ENCODE measurements at regions of chr14 and their contacts with region 1.

Region 1: GRCh38 chr14:88189417-88190191 is 133.5 kb downstream of the KCNK10 start:
- DNase-seq: peak; percentile 81
- ATAC-seq: peak; percentile 97
- H3K4me3 ChIP-seq: peak overlapping the region in 2 of 3 experiments; percentile 30 to 61; a peak in 4 of 6 replicates
- H3K27ac ChIP-seq: no peak overlapping the region
- H3K4me1 ChIP-seq: peaks cover 13% of the 10 kb centered on the region
- H3K27me3 ChIP-seq: peaks cover 1 to 15% of the 10 kb centered on the region in 2 experiments; a peak in 2 of 5 replicates
- CTCF ChIP-seq: peak; percentile 84
- EP300 ChIP-seq: no peak
- POLR2A ChIP-seq: no peak
- RAD21 ChIP-seq: peak; percentile 57; the same call in 1 of the 2 replicates

Region 2: DNA sequence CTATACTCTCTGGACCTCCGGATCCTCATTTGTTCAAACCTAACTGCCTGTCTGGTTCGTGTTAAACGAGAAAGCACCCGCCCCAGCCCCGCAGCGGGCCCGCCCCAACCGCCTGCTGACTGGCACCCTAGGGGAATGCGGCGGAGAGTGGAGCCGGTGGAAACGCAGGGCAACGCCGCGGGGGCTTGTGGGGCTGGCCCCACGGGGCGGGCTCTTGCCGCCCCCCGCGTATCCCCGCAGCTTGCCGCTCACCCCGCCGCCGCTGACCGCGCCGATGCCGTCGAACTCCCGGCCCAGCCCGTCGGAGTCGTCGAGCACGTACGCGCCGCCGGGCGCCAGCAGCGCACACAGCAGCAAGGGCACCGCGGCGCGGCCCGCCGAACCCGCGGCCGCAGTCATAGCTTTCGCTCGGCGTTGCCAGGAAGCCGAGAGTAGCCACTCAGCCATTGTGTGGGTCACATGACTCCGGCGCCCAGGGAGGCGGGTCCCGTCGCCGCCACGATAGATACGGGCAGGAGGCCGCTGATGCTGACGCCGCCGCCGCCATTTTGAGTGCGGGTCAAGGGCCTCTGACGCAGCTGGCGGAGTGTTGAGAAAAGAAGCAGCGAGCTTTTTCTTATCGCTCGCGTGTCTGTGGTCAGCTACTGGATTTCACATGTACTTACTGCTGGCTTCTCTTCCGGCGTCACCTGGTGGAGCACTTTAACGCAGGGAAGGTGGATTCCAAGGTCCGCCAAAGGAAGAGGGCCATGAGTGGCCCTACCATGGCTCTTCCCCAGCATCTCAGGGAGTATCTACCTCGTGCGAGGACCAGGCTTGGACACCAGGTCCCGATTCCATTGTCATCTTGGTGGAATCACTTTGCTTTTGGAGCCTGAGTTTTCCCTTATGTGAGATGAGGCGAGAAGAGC is 196.6 kb before region 1 on chr14 and contains the start of gene GALC:
- CTCF ChIA-PET with region 1: no interaction called
- POLR2A ChIA-PET with region 1: no interaction called
- in situ Hi-C with region 1: no loop called
- intact Hi-C with region 1: no loop called
- DNase-seq: no peak
- ATAC-seq: no peak
- H3K4me3 ChIP-seq: no peak within 1 kb of the TSS
- H3K27ac ChIP-seq: no peak within 1 kb of the TSS
- H3K4me1 ChIP-seq: peaks cover 35% of the 10 kb centered on the region
- H3K27me3 ChIP-seq: no peaks in the 10 kb centered on the region
- CTCF ChIP-seq: no peak
- EP300 ChIP-seq: no peak
- POLR2A ChIP-seq: no peak
- RAD21 ChIP-seq: no peak
- total RNA-seq, gene GALC: not detected in 2 replicates

Region 3: GRCh38 chr14:88106377-88106776 is 83.2 kb before region 1 on chr14:
- CTCF ChIA-PET with region 1: no interaction called
- POLR2A ChIA-PET with region 1: no interaction called
- in situ Hi-C with region 1: no loop called
- intact Hi-C with region 1: no loop called
- DNase-seq: no peak
- ATAC-seq: peak; percentile 52
- H3K4me3 ChIP-seq: no peak overlapping the region
- H3K27ac ChIP-seq: no peak overlapping the region
- H3K4me1 ChIP-seq: no peaks in the 10 kb centered on the region
- H3K27me3 ChIP-seq: no peaks in the 10 kb centered on the region
- CTCF ChIP-seq: no peak
- EP300 ChIP-seq: no peak
- POLR2A ChIP-seq: no peak
- RAD21 ChIP-seq: no peak

Region 4: GRCh38 chr14:88154321-88154720 is 35.3 kb before region 1 on chr14:
- CTCF ChIA-PET with region 1: no interaction called
- POLR2A ChIA-PET with region 1: no interaction called
- in situ Hi-C with region 1: no loop called
- intact Hi-C with region 1: no loop called
- DNase-seq: no peak
- ATAC-seq: no peak
- H3K4me3 ChIP-seq: no peak overlapping the region
- H3K27ac ChIP-seq: no peak overlapping the region
- H3K4me1 ChIP-seq: no peaks in the 10 kb centered on the region
- H3K27me3 ChIP-seq: peaks cover 0 to 4% of the 10 kb centered on the region in 2 experiments; a peak in 2 of 5 replicates
- CTCF ChIP-seq: no peak
- EP300 ChIP-seq: no peak
- POLR2A ChIP-seq: no peak
- RAD21 ChIP-seq: no peak

Region 5: GRCh38 chr14:88168498-88169165 is 21.0 kb before region 1 on chr14:
- CTCF ChIA-PET with region 1: no interaction called
- POLR2A ChIA-PET with region 1: no interaction called
- in situ Hi-C with region 1: no loop called
- intact Hi-C with region 1: no loop called
- DNase-seq: peak; percentile 50
- ATAC-seq: peak; percentile 95
- H3K4me3 ChIP-seq: no peak overlapping the region
- H3K27ac ChIP-seq: no peak overlapping the region
- H3K4me1 ChIP-seq: peaks cover 19% of the 10 kb centered on the region
- H3K27me3 ChIP-seq: no peaks in the 10 kb centered on the region
- CTCF ChIP-seq: peak; percentile 89
- EP300 ChIP-seq: no peak
- POLR2A ChIP-seq: no peak
- RAD21 ChIP-seq: peak; percentile 40; the same call in 1 of the 2 replicates

Region 6: DNA sequence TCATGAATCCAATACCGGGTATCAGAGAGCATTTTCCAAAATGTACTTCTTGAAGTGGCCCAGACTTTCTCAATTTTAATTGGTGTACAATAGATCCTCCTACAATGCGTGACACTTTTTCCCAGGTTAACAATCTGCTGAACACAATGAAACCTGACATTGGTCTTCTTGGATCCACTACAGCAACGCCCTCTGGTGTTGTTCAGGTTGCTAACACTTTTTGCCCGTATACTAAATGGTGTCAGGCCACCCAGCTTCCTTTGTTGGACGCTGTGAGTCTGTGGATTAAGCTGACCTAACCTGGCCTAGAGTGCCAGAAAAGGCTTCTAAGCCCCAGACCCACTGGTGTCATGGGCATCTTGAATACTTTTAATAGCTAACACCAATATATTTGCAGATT is 44.3 kb after region 1 on chr14:
- CTCF ChIA-PET with region 1: interaction called, 7 read pairs
- POLR2A ChIA-PET with region 1: no interaction called
- in situ Hi-C with region 1: no loop called
- intact Hi-C with region 1: loop called (anchors 1 kb)
- DNase-seq: peak; percentile 40
- ATAC-seq: peak; percentile 83
- H3K4me3 ChIP-seq: no peak overlapping the region
- H3K27ac ChIP-seq: no peak overlapping the region
- H3K4me1 ChIP-seq: no peaks in the 10 kb centered on the region
- H3K27me3 ChIP-seq: no peaks in the 10 kb centered on the region; a peak in 1 of 5 replicates
- CTCF ChIP-seq: peak; percentile 70
- EP300 ChIP-seq: no peak
- POLR2A ChIP-seq: no peak
- RAD21 ChIP-seq: peak; percentile 40

Region 7: GRCh38 chr14:88380405-88380804 is 190.8 kb after region 1 on chr14:
- CTCF ChIA-PET with region 1: no interaction called
- POLR2A ChIA-PET with region 1: no interaction called
- in situ Hi-C with region 1: no loop called
- intact Hi-C with region 1: loop called (anchors 1 kb)
- DNase-seq: no peak
- ATAC-seq: 0 out of 3 replicates have a peak, but pooled peaks have one; percentile 19
- H3K4me3 ChIP-seq: no peak overlapping the region
- H3K27ac ChIP-seq: no peak overlapping the region
- H3K4me1 ChIP-seq: peaks cover 8% of the 10 kb centered on the region
- H3K27me3 ChIP-seq: no peaks in the 10 kb centered on the region
- CTCF ChIP-seq: peak; percentile 49
- EP300 ChIP-seq: no peak
- POLR2A ChIP-seq: no peak
- RAD21 ChIP-seq: no peak

Region 8: DNA sequence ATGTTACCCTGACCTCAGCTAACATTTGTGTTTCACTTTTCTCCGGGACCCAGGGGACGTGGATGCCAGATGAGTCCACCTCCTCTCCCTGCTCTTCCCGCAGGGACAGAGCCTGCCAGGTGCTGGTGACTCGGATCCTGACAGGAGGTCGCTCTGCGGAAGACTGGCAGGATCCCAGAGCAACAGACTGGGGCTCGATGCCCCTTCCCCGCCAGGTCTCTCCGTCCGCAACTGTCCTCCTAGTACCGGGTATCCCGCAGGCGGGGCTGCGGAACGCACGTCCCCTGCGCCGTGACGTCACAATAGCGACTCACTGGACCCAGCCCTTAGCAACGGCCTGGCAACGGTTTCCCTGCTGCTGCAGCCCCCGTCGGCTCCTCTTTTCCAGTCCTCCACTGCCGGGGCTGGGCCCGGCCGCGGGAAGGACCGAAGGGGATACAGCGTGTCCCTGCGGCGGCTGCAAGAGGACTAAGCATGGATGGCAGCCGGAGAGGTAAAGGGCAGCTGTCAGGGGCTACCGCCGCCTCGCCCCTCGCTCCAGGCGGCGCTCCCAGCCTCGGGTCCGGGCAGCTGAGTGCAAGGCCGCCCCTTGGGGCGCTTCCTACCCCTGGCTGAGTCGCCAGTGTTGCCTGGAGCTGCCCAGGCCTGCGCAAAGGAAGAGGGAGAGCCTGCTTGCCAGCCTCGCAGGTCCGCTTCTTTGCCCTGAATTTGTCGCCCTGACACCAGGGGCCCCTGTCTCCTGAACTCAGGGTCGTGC is 195.9 kb after region 1 on chr14 and contains the start of gene SPATA7:
- CTCF ChIA-PET with region 1: no interaction called
- POLR2A ChIA-PET with region 1: no interaction called
- in situ Hi-C with region 1: no loop called
- intact Hi-C with region 1: loop called (anchors 1 kb)
- DNase-seq: peak; percentile 83
- ATAC-seq: peak; percentile 97
- H3K4me3 ChIP-seq: peak within 1 kb of the TSS; percentile 81 to 90 (median 90)
- H3K27ac ChIP-seq: peak within 1 kb of the TSS; percentile 61
- H3K4me1 ChIP-seq: peaks cover 16% of the 10 kb centered on the region
- H3K27me3 ChIP-seq: no peaks in the 10 kb centered on the region
- CTCF ChIP-seq: peak; percentile 22; the same call in 1 of the 2 replicates
- EP300 ChIP-seq: no peak
- POLR2A ChIP-seq: peak; percentile 43 to 88; a peak in 3 of 4 replicates
- RAD21 ChIP-seq: peak; percentile 31; the same call in 1 of the 2 replicates
- total RNA-seq, gene SPATA7: 4.9 and 5.5 TPM in 2 replicates

Region 9: DNA sequence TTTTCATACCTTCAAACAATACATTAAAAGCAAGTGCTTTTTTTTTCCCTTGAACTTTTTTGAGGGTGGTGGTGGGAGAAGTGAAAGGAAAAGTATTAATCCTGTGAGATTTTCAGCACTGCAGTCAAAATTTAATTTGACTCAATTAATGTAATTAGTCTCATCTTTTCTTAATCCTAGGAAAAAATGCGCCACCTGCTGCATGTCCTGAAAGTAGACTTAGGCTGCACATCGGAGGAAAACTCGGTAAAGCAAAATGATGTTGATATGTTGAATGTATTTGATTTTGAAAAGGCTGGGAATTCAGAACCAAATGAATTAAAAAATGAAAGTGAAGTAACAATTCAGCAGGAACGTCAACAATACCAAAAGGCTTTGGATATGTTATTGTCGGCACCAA is 248.1 kb after region 1 on chr14:
- CTCF ChIA-PET with region 1: no interaction called
- POLR2A ChIA-PET with region 1: no interaction called
- in situ Hi-C with region 1: no loop called
- intact Hi-C with region 1: loop called (anchors 5 kb)
- DNase-seq: no peak
- ATAC-seq: no peak
- H3K4me3 ChIP-seq: no peak overlapping the region
- H3K27ac ChIP-seq: no peak overlapping the region
- H3K4me1 ChIP-seq: no peaks in the 10 kb centered on the region
- H3K27me3 ChIP-seq: no peaks in the 10 kb centered on the region
- CTCF ChIP-seq: no peak
- EP300 ChIP-seq: no peak
- POLR2A ChIP-seq: no peak
- RAD21 ChIP-seq: no peak